ENCODE measurements at regions of chr5 and their contacts with region 1.

Region 1: DNA sequence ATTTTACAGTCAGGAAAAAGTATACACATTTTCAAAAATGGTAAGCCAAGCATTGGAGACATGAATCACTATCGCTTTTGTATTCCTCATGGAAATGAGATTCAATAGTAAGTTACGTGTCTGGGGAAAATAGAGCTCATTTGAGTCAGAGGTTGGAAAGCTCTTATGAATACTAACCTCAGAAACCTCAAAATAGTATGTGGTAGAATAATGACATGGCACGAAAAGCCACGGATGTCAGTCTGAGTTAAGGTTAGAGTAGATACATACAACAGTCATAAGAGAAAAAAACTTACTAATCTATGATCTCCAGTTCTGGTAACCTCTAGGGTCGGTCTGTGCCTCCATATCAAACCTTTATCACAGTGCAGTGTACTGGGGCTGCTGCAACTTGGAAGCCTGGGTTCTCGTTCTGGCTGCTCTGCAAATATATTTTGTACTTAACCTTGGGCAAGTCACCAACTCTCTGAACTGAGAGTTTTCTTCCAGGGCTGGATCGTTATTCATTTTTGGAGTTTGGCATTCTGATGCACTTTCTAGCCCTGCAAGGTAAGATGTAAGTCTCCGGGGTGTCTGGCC is 31.8 kb downstream of the MAP1B start:
- DNase-seq: no peak
- ATAC-seq: no peak
- H3K4me3 ChIP-seq: no peak overlapping the region
- H3K27ac ChIP-seq: peak overlapping the region in 1 of 4 donors; percentile 3
- H3K4me1 ChIP-seq: peaks cover 0 to 4% of the 10 kb centered on the region in 2 donors
- H3K27me3 ChIP-seq: no peaks in the 10 kb centered on the region
- CTCF ChIP-seq: no peak
- POLR2A ChIP-seq: no peak

Region 2: GRCh38 chr5:72244862-72245371 is 105.9 kb after region 1 on chr5:
- in situ Hi-C with region 1: no loop called
- intact Hi-C with region 1: loop called (anchors 10 kb)
- DNase-seq: no peak
- ATAC-seq: peak in 1 of 2 donors; percentile 70
- H3K4me3 ChIP-seq: no peak overlapping the region
- H3K27ac ChIP-seq: no peak overlapping the region
- H3K4me1 ChIP-seq: peaks cover 26 to 34% of the 10 kb centered on the region in 2 donors
- H3K27me3 ChIP-seq: no peaks in the 10 kb centered on the region
- CTCF ChIP-seq: peak in 1 of 5 experiments; percentile 27
- POLR2A ChIP-seq: no peak

Region 3: DNA sequence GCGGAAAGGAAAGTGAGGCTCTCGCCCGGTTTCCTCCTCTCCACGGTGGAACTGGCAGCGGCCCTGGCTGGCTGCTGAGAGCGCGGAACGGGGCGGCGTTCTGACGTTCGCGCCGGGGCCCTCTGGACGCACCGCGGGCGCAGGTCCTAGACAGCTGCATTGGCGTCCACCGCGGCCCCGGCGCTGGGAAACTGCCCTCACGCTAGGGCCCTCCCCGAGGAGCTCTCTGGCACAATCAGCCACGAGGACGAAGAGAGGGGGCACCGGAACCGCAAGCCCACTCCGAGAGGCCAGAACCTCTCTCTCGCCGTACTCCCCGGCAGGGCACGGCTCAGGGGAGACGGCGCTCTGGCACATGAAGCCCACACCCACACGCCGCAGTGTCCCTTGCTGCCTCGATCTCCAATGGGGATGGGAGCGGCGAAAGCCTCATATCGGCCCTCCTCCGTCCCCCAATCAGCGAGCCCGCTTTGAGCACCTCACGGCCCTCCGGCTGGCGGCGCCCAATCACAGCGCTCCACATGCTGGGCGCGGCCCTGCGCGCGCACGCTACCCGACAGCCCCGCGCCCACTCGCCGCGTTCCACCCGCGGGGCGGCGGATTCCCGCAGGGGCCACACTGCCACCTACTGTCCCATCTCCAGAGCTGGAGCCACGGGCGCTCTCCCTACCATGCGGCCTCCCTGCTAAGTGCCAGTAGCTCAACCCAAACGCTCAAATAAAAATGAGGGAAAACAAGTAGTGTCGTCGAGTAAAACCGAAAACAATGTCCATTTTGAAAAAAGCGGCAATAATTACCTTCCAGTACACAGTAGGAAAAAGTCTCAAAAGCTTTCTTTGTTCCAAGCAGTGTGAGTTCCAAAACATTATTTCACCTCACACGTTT is 169.2 kb after region 1 on chr5:
- in situ Hi-C with region 1: loop called (anchors 5 to 10 kb)
- intact Hi-C with region 1: loop called (anchors 1 kb)
- DNase-seq: peak; percentile 98
- ATAC-seq: peak; percentile 97
- H3K4me3 ChIP-seq: peak overlapping the region; percentile 63 to 86 (median 81)
- H3K27ac ChIP-seq: peak overlapping the region; percentile 91 to 97 (median 94)
- H3K4me1 ChIP-seq: peaks cover 7 to 8% of the 10 kb centered on the region in 2 donors
- H3K27me3 ChIP-seq: no peaks in the 10 kb centered on the region
- CTCF ChIP-seq: peak; percentile 86 to 93 (median 87)
- POLR2A ChIP-seq: peak; percentile 83 to 95

Region 4: DNA sequence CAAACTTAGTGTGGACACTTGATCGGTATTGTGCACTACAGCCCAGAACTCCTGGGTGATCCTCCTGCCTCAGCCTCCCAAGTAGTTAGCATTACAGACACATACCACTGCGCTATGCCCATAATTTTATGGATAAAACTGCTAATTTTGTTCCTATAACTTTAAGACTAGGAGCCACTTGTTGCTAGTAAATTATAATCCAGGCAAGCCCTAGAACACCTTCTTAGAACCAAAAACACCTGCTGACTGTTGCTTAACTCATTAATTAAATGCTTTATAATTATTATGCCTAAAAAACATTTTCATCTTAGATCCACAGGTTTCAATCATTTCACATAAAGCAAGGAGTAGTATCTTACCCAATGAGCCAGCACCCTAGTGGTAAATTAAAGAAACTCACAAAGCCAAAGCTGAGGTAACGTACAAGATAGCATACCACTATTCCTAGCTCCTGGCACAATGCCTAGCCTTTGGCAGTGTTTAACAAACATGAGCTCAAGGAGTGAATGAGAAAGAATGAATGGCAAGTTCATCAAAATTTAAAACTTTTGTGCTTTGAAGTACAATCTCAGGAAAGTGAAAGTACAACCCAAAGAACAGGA is 175.6 kb after region 1 on chr5:
- in situ Hi-C with region 1: loop called (anchors 5 to 10 kb)
- intact Hi-C with region 1: no loop called
- DNase-seq: no peak
- ATAC-seq: no peak
- H3K4me3 ChIP-seq: no peak overlapping the region
- H3K27ac ChIP-seq: no peak overlapping the region
- H3K4me1 ChIP-seq: peaks cover 12 to 18% of the 10 kb centered on the region in 2 donors
- H3K27me3 ChIP-seq: no peaks in the 10 kb centered on the region
- CTCF ChIP-seq: no peak
- POLR2A ChIP-seq: no peak

Region 5: DNA sequence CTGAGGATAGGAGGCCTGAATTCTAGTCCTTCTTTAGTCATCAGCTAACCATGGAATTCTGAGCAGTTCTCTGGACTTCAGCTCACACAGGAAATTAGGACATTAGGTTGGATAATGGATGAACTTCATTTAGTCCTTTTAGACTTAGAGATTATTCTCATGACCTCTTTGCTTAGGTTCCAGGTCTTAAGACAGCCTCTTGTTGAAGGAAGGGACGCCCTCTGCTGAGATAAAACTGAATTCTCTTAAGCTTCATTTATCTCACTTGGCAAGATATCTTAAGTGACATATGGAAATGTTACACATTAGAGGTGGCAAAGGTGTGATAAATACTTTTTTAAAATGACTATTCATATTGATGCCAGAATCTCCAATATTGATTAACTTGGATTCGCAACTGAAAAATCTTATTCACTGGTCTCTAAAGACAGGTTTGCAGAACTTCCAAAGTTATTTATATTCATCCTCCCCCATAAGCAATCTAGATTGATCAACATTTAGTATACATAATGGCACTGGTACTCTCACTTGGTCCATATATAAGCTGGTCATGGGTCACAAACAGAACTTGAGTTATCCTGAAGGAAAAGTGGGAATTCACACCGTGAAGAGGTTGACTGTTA is 385.0 kb after region 1 on chr5:
- in situ Hi-C with region 1: loop called in 2 of 4 experiments (anchors 25 kb)
- intact Hi-C with region 1: loop called (anchors 10 kb)
- DNase-seq: no peak
- ATAC-seq: peak; percentile 85 to 93
- H3K4me3 ChIP-seq: no peak overlapping the region
- H3K27ac ChIP-seq: peak overlapping the region in 3 of 4 donors; percentile 15 to 44 (median 33)
- H3K4me1 ChIP-seq: peaks cover 3 to 4% of the 10 kb centered on the region in 2 donors
- H3K27me3 ChIP-seq: no peaks in the 10 kb centered on the region
- CTCF ChIP-seq: peak; percentile 54 to 68 (median 65)
- POLR2A ChIP-seq: no peak